ENCODE measurements at regions of chr17 and their contacts with region 1.

Region 1: GRCh38 chr17:76452660-76453430 is at the start of gene UBE2O:
- DNase-seq: peak; percentile 83
- ATAC-seq: peak; percentile 92
- H3K4me3 ChIP-seq: peak within 1 kb of the TSS; percentile 84 to 97 (median 92)
- H3K27ac ChIP-seq: peak within 1 kb of the TSS; percentile 67
- H3K4me1 ChIP-seq: peaks cover 42% of the 10 kb centered on the region
- H3K27me3 ChIP-seq: no peaks in the 10 kb centered on the region; a peak in 1 of 5 replicates
- CTCF ChIP-seq: peak; percentile 87
- EP300 ChIP-seq: no peak
- POLR2A ChIP-seq: peak in 1 of 2 experiments; percentile 90; a peak in 2 of 4 replicates
- RAD21 ChIP-seq: peak; percentile 42; the same call in 1 of the 2 replicates
- total RNA-seq, gene UBE2O: 21.5 and 22.3 TPM in 2 replicates

Region 2: GRCh38 chr17:76191896-76192295 is 260.9 kb before region 1 on chr17:
- CTCF ChIA-PET with region 1: no interaction called
- POLR2A ChIA-PET with region 1: no interaction called
- in situ Hi-C with region 1: no loop called
- intact Hi-C with region 1: no loop called
- DNase-seq: no peak
- ATAC-seq: no peak
- H3K4me3 ChIP-seq: no peak overlapping the region
- H3K27ac ChIP-seq: no peak overlapping the region
- H3K4me1 ChIP-seq: no peaks in the 10 kb centered on the region
- H3K27me3 ChIP-seq: peaks cover 0 to 2% of the 10 kb centered on the region in 2 experiments; a peak in 2 of 5 replicates
- CTCF ChIP-seq: no peak
- EP300 ChIP-seq: no peak
- POLR2A ChIP-seq: no peak
- RAD21 ChIP-seq: no peak

Region 3: GRCh38 chr17:76427501-76428231 is 25.2 kb before region 1 on chr17:
- CTCF ChIA-PET with region 1: no interaction called
- POLR2A ChIA-PET with region 1: no interaction called
- in situ Hi-C with region 1: no loop called
- intact Hi-C with region 1: loop called (anchors 2 kb)
- DNase-seq: no peak
- ATAC-seq: no peak
- H3K4me3 ChIP-seq: no peak overlapping the region
- H3K27ac ChIP-seq: no peak overlapping the region
- H3K4me1 ChIP-seq: peaks cover 12% of the 10 kb centered on the region; the same call in 1 of the 2 replicates
- H3K27me3 ChIP-seq: no peaks in the 10 kb centered on the region
- CTCF ChIP-seq: no peak
- EP300 ChIP-seq: no peak
- POLR2A ChIP-seq: no peak
- RAD21 ChIP-seq: no peak

Region 4: DNA sequence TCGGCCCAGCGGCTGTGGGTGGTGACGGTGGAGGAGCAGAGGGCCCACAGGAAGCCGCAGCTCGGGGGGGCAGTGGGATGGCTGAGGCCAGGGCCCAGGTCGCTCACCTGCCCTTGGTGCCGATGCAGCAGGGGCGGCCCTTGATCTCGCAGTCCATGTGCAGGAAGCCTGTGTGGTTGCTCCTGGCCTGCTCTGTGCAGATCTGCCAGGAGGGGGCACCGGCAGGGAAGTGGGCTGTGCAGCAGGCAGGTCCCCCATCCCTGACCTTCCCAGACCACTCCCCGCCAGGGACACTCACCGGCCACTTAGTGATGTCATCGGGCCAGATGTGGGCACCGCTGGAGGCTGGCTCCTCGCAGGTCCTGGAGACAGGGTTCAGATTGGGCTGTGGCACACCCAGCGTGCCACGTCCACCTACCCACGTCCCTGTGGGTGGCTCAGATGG is 20.7 kb after region 1 on chr17:
- CTCF ChIA-PET with region 1: no interaction called
- POLR2A ChIA-PET with region 1: no interaction called
- in situ Hi-C with region 1: no loop called
- intact Hi-C with region 1: no loop called
- DNase-seq: no peak
- ATAC-seq: peak; percentile 80
- H3K4me3 ChIP-seq: no peak overlapping the region
- H3K27ac ChIP-seq: no peak overlapping the region
- H3K4me1 ChIP-seq: peaks cover 19% of the 10 kb centered on the region
- H3K27me3 ChIP-seq: no peaks in the 10 kb centered on the region
- CTCF ChIP-seq: peak; percentile 78
- EP300 ChIP-seq: no peak
- POLR2A ChIP-seq: no peak
- RAD21 ChIP-seq: peak; percentile 82

Region 5: DNA sequence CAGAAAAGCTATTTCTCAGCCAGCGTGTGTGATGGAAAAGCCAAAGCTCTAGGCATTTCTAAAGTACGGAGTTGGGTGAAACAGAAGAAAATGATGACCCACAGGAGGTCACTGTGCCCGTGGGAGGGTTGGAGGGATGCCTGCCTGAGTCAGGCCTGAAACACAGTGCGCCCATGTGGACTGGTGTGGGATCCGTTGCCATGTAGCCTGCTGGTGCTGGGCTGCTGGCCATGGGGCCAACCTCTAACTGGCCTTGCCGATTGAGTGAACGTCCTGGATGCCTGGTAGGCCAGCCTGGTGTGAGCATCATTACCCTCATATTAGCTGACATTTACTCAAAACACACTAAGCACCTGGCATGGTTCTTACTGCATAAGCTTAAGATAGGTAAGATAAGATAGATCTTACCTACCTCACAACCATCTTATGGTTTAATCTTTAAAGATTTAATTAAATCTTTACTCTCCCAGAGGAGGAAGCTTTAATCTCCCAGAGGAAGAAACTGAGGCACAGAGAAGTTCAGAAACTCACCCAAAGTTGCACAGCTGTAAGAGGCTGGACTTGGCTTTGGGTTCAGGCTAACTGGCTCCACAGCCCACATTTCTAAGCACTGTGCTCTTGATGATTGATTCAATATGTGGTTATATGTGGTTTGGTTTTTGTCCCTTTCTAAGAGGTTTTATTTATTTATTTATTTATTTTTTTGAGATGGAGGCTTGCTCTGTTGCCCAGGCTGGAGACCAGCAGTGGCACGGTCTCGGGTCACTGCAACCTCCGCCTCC is 431.1 kb after region 1 on chr17:
- CTCF ChIA-PET with region 1: no interaction called
- POLR2A ChIA-PET with region 1: no interaction called
- in situ Hi-C with region 1: no loop called
- intact Hi-C with region 1: no loop called
- DNase-seq: no peak
- ATAC-seq: no peak
- H3K4me3 ChIP-seq: no peak overlapping the region
- H3K27ac ChIP-seq: no peak overlapping the region
- H3K4me1 ChIP-seq: 0 out of 2 replicates have a peak, but pooled peaks cover 7% of the 10 kb centered on the region
- H3K27me3 ChIP-seq: peaks cover 8 to 67% of the 10 kb centered on the region in 2 experiments; a peak in 4 of 5 replicates
- CTCF ChIP-seq: no peak
- EP300 ChIP-seq: no peak
- POLR2A ChIP-seq: no peak
- RAD21 ChIP-seq: no peak